K562 (cell line): ENCODE measurements at regions of chr17 and their contacts with region 1.

Region 1: GRCh38 chr17:77182205-77183172 is 41.7 kb downstream of the SEC14L1 start:
- DNase-seq: peak in 1 of 4 experiments; percentile 17
- ATAC-seq: no peak
- H3K4me3 ChIP-seq: no peak overlapping the region
- H3K27ac ChIP-seq: no peak overlapping the region
- H3K4me1 ChIP-seq: peaks cover 15 to 19% of the 10 kb centered on the region in 2 experiments
- H3K27me3 ChIP-seq: no peaks in the 10 kb centered on the region; a peak in 1 of 5 replicates
- CTCF ChIP-seq: no peak
- EP300 ChIP-seq: no peak
- POLR2A ChIP-seq: no peak
- RAD21 ChIP-seq: no peak

Region 2: GRCh38 chr17:77109764-77110359 is 72.6 kb before region 1 on chr17:
- CTCF ChIA-PET with region 1: no interaction called
- POLR2A ChIA-PET with region 1: no interaction called
- in situ Hi-C with region 1: no loop called
- intact Hi-C with region 1: no loop called
- DNase-seq: no peak
- ATAC-seq: no peak
- H3K4me3 ChIP-seq: no peak overlapping the region
- H3K27ac ChIP-seq: peak overlapping the region; percentile 39; the same call in 2 of the 3 replicates
- H3K4me1 ChIP-seq: peaks cover 16 to 33% of the 10 kb centered on the region in 2 experiments; a peak in 4 of 5 replicates
- H3K27me3 ChIP-seq: no peaks in the 10 kb centered on the region
- CTCF ChIP-seq: no peak
- EP300 ChIP-seq: no peak
- POLR2A ChIP-seq: no peak
- RAD21 ChIP-seq: no peak

Region 3: GRCh38 chr17:77164483-77165091 is 17.9 kb before region 1 on chr17:
- CTCF ChIA-PET with region 1: no interaction called
- POLR2A ChIA-PET with region 1: interaction called, 11 read pairs
- in situ Hi-C with region 1: no loop called
- intact Hi-C with region 1: no loop called
- DNase-seq: peak in 2 of 4 experiments; percentile 28 to 62
- ATAC-seq: peak; percentile 67
- H3K4me3 ChIP-seq: no peak overlapping the region
- H3K27ac ChIP-seq: peak overlapping the region; percentile 46; the same call in 2 of the 3 replicates
- H3K4me1 ChIP-seq: peaks cover 27 to 47% of the 10 kb centered on the region in 2 experiments
- H3K27me3 ChIP-seq: no peaks in the 10 kb centered on the region
- CTCF ChIP-seq: no peak
- EP300 ChIP-seq: no peak
- POLR2A ChIP-seq: no peak
- RAD21 ChIP-seq: no peak